HepG2 (cell line): ENCODE measurements at regions of chr1 and their contacts with region 1.

Region 1: DNA sequence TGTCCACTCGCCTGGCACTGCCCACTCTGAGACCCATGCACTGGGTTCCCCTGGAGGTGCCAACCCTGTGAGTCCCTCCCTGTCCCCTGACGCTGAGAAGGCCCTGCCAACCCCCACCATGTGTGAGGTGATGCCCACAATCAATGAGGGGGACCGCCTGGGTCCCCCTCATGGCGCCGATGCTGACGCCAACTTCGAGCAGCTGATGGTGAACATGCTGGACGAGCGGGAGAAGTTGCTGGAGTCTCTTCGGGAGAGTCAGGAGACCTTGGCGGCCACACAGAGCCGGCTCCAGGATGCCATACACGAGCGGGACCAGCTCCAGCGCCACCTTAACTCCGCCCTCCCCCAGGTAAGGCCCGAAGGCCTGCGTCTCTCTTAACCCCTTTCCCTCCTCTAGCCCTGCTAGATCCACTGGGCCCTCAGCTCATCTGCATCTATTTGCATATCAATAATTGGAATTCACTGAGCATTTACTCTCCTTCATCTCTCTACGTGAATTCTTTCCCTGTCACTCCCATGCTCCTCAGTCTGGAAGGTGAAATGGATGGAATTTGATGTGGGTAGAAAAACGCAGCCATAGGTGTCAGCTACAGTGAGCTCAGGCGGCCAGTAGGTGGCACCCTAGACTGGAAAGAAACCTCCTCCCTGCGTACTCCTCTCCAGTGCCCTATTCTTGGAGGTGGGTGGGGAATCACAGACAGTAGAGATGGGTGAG is 12.8 kb downstream of the PPFIA4 start:
- DNase-seq: peak; percentile 34
- ATAC-seq: peak; percentile 91
- H3K4me3 ChIP-seq: no peak overlapping the region
- H3K27ac ChIP-seq: no peak overlapping the region
- H3K4me1 ChIP-seq: no peaks in the 10 kb centered on the region
- H3K27me3 ChIP-seq: peaks cover under 1 to 26% of the 10 kb centered on the region in 2 experiments; a peak in 3 of 5 replicates
- CTCF ChIP-seq: peak; percentile 89
- EP300 ChIP-seq: no peak
- POLR2A ChIP-seq: no peak
- RAD21 ChIP-seq: peak; percentile 38; the same call in 1 of the 2 replicates

Region 2: DNA sequence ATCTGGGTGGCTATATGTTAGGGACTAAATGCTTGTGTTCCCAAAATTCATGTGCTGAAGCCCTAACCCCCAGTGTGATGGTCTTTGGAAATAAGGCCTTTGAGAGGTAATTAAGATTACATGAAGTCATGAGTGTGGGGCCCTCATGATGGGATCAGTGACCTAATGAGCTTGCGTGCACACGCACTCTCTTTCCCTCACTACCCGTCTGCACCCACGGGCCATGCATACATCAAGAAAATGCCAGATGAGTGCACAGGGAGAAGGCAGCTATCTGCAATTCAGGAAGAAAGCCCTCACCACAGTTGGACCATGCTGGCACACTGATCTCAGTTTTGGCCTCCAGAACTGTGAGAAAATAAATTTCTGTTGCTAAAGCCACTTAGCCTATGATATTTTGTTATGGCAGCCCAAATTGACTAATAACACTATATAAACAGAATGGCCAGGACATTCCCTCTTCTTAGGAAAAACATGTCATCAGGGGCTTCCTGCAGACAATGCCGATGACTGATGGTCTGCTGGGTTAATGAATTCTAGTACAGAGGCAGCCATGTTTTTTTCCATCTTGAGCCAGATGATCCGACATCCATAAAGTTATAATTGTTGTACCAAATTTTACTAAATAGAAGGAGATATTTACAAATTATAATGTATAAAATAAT is 64.9 kb after region 1 on chr1:
- CTCF ChIA-PET with region 1: no interaction called
- POLR2A ChIA-PET with region 1: no interaction called
- in situ Hi-C with region 1: no loop called
- intact Hi-C with region 1: loop called (anchors 2 kb)
- DNase-seq: no peak
- ATAC-seq: no peak
- H3K4me3 ChIP-seq: no peak overlapping the region
- H3K27ac ChIP-seq: no peak overlapping the region
- H3K4me1 ChIP-seq: peaks cover 8% of the 10 kb centered on the region
- H3K27me3 ChIP-seq: peaks cover 2% of the 10 kb centered on the region in 2 experiments; a peak in 2 of 5 replicates
- CTCF ChIP-seq: no peak
- EP300 ChIP-seq: no peak
- POLR2A ChIP-seq: no peak
- RAD21 ChIP-seq: no peak

Region 3: DNA sequence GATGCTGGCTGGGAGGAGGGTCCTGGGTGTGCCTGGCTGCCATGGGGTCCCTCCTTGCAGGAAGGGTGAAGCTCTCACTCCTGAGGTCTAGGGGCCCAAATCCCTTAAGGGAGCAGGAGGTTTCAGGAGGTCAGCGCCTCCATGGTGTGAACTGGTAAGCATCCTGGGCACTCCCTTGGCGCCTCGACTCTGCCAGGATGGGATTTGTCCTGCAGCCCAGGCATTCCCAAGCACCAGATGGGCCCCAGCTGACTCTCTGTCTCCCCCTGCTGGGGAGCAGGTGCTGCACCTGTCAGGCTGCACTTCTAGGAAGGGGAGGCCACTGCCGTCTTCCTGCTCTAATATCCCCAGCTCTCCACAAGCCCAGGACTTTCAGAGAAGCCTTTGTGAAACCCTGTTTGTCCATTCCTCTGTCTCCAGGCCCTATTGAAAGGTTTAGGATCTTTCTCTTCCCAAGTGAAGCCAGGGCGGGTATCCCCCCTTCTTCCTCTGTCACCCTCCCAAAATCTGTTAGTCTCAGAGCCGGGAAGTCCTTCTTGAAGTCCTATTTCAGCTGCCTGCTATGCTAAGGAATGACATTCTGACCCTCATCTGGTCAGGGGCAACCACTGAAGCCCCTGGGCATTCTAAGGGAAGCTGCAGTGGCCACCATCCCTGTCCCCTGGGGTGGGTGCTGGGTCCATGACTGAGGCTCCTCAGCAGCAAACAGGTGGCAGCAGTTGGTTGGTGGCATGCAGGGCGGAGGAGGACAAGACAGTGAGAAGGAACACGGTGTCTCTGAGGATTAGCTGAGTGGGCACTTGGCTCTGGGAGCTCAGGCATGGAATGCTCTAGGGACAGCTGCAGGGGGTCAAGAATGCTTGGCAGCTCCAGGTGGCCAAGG is 133.3 kb after region 1 on chr1:
- CTCF ChIA-PET with region 1: interaction called, 5 read pairs
- POLR2A ChIA-PET with region 1: no interaction called
- in situ Hi-C with region 1: no loop called
- intact Hi-C with region 1: loop called (anchors 1 kb)
- DNase-seq: peak; percentile 37
- ATAC-seq: peak; percentile 85
- H3K4me3 ChIP-seq: no peak overlapping the region
- H3K27ac ChIP-seq: no peak overlapping the region
- H3K4me1 ChIP-seq: peaks cover 5% of the 10 kb centered on the region
- H3K27me3 ChIP-seq: peaks cover 2 to 13% of the 10 kb centered on the region in 2 experiments; a peak in 3 of 5 replicates
- CTCF ChIP-seq: peak; percentile 86
- EP300 ChIP-seq: no peak
- POLR2A ChIP-seq: no peak
- RAD21 ChIP-seq: peak; percentile 51; the same call in 1 of the 2 replicates

Region 4: DNA sequence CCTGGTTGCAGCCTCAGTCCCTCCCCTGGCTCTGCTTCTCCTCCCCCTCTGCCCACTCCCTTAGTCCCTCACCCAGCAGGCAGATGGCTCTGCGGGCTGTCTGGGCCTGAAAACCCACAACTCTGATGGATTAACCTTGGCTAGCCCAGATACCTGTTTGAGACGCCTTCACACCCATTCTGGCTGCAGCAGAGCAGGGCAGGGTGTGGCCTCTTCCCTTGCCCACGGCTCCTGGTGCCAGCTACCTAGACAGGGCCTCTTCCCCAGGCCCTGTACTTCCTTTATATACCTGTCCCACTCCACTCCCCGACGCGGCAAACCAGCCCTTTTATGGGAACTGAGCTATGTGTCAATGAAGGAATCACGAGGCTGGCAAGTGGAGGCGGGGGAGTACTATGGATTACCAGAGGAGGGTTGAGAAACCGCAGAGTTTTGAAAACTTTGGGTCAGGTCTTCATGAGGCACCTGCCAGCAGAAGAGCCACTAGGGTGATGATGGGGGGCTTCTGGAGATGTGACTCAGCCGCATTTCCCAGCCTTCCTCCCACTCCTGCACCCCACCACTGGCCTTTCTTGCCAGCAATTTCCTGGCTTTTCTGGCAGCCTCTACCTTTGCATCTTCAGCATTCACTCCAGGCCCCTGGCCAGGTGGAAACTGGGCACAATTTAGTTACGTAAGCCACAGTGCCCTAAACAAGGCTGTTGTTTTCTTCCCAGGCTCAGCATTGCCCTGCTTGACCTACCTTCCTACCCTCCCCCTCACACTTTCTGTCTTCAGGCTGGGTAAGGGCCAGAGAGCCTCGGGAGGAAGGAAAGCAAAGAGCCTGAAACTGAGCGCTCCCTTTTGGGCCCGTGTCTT is 147.6 kb after region 1 on chr1 and contains the start of gene CHI3L1:
- CTCF ChIA-PET with region 1: no interaction called
- POLR2A ChIA-PET with region 1: no interaction called
- in situ Hi-C with region 1: no loop called
- intact Hi-C with region 1: no loop called
- DNase-seq: no peak
- ATAC-seq: no peak
- H3K4me3 ChIP-seq: no peak within 1 kb of the TSS
- H3K27ac ChIP-seq: no peak within 1 kb of the TSS
- H3K4me1 ChIP-seq: no peaks in the 10 kb centered on the region
- H3K27me3 ChIP-seq: peaks cover 0 to 18% of the 10 kb centered on the region in 2 experiments; a peak in 3 of 5 replicates
- CTCF ChIP-seq: no peak
- EP300 ChIP-seq: no peak
- POLR2A ChIP-seq: no peak
- RAD21 ChIP-seq: no peak
- total RNA-seq, gene CHI3L1: 0.13 TPM in 1 of 2 replicates, not detected in the other

Region 5: GRCh38 chr1:203216274-203217138 is 177.5 kb after region 1 on chr1:
- CTCF ChIA-PET with region 1: interaction called, 13 read pairs
- POLR2A ChIA-PET with region 1: no interaction called
- in situ Hi-C with region 1: loop called (anchors 5 kb)
- intact Hi-C with region 1: loop called (anchors 5 kb)
- DNase-seq: peak; percentile 53
- ATAC-seq: peak; percentile 84
- H3K4me3 ChIP-seq: no peak overlapping the region
- H3K27ac ChIP-seq: no peak overlapping the region
- H3K4me1 ChIP-seq: peaks cover 5% of the 10 kb centered on the region
- H3K27me3 ChIP-seq: peaks cover 0 to 22% of the 10 kb centered on the region in 2 experiments; a peak in 3 of 5 replicates
- CTCF ChIP-seq: peak; percentile 85
- EP300 ChIP-seq: no peak
- POLR2A ChIP-seq: no peak
- RAD21 ChIP-seq: peak; percentile 71; the same call in 1 of the 2 replicates

Region 6: GRCh38 chr1:203267347-203267846 is 228.3 kb after region 1 on chr1:
- CTCF ChIA-PET with region 1: interaction called, 5 read pairs
- POLR2A ChIA-PET with region 1: no interaction called
- in situ Hi-C with region 1: loop called (anchors 5 kb)
- intact Hi-C with region 1: loop called (anchors 2 kb)
- DNase-seq: peak; percentile 72
- ATAC-seq: peak; percentile 80
- H3K4me3 ChIP-seq: peak overlapping the region; percentile 56 to 82 (median 70); a peak in 5 of 6 replicates
- H3K27ac ChIP-seq: no peak overlapping the region
- H3K4me1 ChIP-seq: 0 out of 2 replicates have a peak, but pooled peaks cover 5% of the 10 kb centered on the region
- H3K27me3 ChIP-seq: peaks cover 0 to 3% of the 10 kb centered on the region in 2 experiments; a peak in 3 of 5 replicates
- CTCF ChIP-seq: peak; percentile 80
- EP300 ChIP-seq: no peak
- POLR2A ChIP-seq: no peak
- RAD21 ChIP-seq: no peak